Mammary epithelial cell (primary cell): ENCODE measurements at regions of chr6 and their contacts with region 1.

Region 1: DNA sequence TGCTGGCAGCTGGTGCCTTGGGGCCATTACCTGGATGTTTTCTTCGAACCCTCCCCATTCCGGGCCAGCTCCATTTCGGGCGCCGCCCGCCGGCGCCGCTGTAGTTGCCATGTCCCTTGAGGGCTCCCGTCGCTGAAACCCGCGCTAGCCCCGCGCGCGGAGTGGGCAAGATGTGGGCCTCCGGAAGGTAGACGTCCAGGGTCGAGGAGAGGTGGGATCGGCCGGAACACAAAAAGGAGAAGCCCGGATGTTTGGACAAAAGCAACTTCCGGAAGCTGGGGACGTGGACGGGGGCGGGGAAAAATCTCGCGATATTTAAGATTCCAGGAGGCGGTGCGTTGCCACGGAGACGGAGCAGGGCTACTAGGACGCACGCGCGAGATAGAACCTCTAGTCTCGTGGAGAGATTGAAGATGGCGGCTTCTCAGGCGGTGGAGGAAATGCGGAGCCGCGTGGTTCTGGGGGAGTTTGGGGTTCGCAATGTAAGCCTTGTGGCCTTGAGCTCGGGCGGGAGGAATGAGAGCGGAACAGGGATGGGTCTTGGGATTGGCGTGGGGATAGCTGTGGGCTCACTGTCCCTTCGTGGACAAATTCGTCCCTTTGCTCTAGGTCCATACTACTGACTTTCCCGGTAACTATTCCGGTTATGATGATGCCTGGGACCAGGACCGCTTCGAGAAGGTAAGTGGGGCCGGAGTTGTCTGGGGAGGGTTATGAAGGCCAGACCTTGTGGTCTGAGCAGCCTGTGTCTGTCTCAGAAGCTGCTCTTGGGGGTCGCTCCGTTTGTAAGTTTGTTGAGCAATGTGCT is at the starts of genes POLR1C and YIPF3:
- DNase-seq: peak; percentile 97
- H3K4me3 ChIP-seq: peak within 1 kb of the TSS; percentile 76 to 98 (median 93)
- H3K27ac ChIP-seq: peak within 1 kb of the TSS; percentile 91
- H3K4me1 ChIP-seq: peaks cover 17% of the 10 kb centered on the region
- H3K27me3 ChIP-seq: no peaks in the 10 kb centered on the region
- CTCF ChIP-seq: no peak
- total RNA-seq, gene POLR1C: 28.2 to 50.5 TPM
- total RNA-seq, gene YIPF3: 71.2 to 83.8 TPM

Region 2: GRCh38 chr6:43174263-43175112 is 342.4 kb before region 1 on chr6:
- CTCF ChIA-PET with region 1: no interaction called
- dilution Hi-C with region 1: no loop called
- in situ Hi-C with region 1: no loop called
- intact Hi-C with region 1: loop called (anchors 5 kb)
- DNase-seq: peak; percentile 98
- H3K4me3 ChIP-seq: peak overlapping the region in 2 of 3 experiments; percentile 69 to 73
- H3K27ac ChIP-seq: peak overlapping the region; percentile 89
- H3K4me1 ChIP-seq: peaks cover 24% of the 10 kb centered on the region
- H3K27me3 ChIP-seq: no peaks in the 10 kb centered on the region
- CTCF ChIP-seq: peak in 1 of 2 donors; percentile 19

Region 3: DNA sequence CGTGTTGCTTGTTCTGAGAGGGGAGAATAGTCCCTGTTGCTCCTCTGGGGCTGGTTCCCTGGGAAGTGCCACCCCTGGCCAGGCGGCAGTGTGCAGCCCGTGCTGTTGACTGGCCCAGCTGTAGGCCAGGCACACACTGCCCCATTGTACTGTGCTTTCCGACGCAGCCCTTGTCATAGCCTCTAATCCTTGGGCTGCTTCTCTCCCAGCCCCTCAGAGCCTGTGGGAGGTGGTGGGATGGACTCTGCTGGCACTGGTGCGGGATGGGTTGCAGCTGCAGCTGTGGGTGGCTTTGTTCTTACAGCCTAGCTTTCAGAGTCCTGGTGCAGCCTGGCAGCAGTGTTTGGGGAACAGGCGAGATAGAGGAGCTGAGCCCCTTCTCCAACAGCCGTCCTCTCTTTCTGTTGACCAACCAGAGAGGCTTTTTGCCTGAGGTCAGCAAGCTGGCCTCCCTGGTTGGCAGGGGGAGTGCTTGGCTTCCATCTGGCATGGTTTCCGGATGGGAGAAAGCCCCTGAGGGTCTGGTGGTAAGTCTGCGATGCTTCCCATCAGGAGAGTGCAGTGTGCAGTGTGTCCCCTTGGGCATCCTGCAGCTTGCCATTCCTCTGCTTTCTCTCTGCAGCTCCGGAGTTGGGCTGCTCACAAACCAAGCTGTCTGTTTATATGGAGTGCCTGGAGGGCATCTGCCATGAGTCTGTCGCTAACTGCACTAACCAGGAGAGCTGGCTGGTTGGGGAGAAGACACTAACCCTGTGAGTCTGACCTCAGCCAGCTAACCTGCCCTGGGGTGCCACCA is 27.4 kb before region 1 on chr6:
- CTCF ChIA-PET with region 1: no interaction called
- dilution Hi-C with region 1: loop called (anchors 5 kb)
- in situ Hi-C with region 1: no loop called
- intact Hi-C with region 1: no loop called
- DNase-seq: no peak
- H3K4me3 ChIP-seq: no peak overlapping the region
- H3K27ac ChIP-seq: no peak overlapping the region
- H3K4me1 ChIP-seq: peaks cover 54% of the 10 kb centered on the region
- H3K27me3 ChIP-seq: no peaks in the 10 kb centered on the region
- CTCF ChIP-seq: no peak

Region 4: DNA sequence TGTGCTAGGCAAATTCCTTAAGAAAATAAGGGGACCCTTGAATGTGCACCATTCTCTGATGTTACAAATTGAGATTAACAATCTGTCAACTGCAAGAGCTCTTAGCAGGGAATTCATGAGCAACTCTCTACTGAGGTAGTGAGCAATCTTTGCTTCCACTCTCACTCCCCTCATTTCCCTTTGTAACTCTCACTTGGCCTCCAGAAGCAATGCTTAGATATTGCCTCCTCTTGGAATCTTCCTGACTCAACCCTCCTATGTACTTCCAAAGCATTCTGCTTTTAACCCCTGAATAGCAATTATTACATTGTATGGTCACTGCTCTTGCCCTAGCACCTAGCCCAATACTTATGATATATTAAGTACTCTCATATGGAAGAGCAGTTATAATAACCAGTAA is 42.4 kb after region 1 on chr6:
- CTCF ChIA-PET with region 1: no interaction called
- dilution Hi-C with region 1: loop called (anchors 5 kb)
- in situ Hi-C with region 1: no loop called
- intact Hi-C with region 1: no loop called
- DNase-seq: no peak
- H3K4me3 ChIP-seq: no peak overlapping the region
- H3K27ac ChIP-seq: no peak overlapping the region
- H3K4me1 ChIP-seq: no peaks in the 10 kb centered on the region
- H3K27me3 ChIP-seq: no peaks in the 10 kb centered on the region
- CTCF ChIP-seq: no peak

Region 5: DNA sequence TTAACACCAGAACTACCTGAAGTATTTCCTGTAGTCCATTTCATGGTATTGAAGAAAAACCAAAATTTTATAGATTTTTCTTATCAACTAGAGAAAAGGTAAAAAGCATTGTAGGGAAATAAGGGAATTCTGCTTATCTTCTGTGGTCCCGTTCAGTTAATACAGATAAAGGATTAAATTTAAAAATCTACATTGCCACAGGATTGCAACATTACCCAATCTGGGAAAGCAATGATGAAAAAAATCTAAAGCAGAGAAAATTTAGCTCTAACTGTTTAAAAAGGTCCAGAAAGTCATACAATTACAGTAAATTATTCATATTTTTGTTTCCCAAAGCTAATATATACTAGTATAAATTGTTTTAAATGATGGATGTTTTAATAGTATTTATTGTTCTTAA is 77.0 kb after region 1 on chr6:
- CTCF ChIA-PET with region 1: no interaction called
- dilution Hi-C with region 1: loop called (anchors 5 kb)
- in situ Hi-C with region 1: no loop called
- intact Hi-C with region 1: no loop called
- DNase-seq: no peak
- H3K4me3 ChIP-seq: no peak overlapping the region
- H3K27ac ChIP-seq: no peak overlapping the region
- H3K4me1 ChIP-seq: no peaks in the 10 kb centered on the region
- H3K27me3 ChIP-seq: no peaks in the 10 kb centered on the region
- CTCF ChIP-seq: no peak

Region 6: GRCh38 chr6:43865932-43866645 is 349.2 kb after region 1 on chr6:
- CTCF ChIA-PET with region 1: no interaction called
- dilution Hi-C with region 1: no loop called
- in situ Hi-C with region 1: no loop called
- intact Hi-C with region 1: no loop called
- DNase-seq: no peak
- H3K4me3 ChIP-seq: no peak overlapping the region
- H3K27ac ChIP-seq: no peak overlapping the region
- H3K4me1 ChIP-seq: no peaks in the 10 kb centered on the region
- H3K27me3 ChIP-seq: no peaks in the 10 kb centered on the region
- CTCF ChIP-seq: no peak